Right ventricle myocardium superior (tissue), 1 donor: ENCODE measurements at regions of chr9 and their contacts with region 1.

Region 1: DNA sequence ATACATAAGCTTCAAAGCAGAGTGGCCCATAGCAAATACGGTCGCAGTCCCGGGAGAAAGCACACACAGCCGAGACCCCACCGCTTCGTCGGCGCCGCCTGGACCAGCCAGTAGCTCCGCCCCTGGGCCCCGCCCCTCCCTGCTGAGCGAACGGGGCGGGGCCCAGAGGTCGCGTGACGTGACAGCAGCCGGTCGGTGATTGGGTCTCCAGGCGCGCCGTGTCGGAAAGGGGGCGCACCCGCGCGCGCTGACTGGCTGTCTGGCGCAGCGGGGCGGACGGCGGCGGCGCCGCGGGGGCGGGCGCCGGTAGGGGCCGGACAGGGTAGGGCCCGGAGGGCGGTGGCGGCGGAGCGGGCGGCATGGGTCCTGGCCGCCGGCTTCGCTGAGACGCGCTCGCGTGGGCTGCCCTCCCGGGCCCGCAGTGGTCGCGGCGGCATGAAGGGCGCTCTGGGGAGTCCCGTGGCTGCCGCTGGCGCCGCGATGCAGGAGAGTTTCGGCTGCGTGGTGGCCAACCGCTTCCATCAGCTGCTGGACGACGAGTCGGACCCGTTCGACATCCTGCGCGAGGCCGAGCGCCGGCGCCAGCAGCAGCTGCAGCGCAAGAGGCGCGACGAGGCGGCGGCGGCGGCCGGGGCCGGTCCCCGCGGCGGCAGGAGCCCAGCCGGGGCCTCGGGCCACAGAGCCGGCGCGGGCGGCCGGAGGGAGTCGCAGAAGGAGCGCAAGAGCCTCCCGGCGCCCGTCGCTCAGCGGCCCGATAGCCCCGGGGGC is at the start of gene HABP4:
- DNase-seq: peak; percentile 99
- ATAC-seq: peak; percentile 99
- total RNA-seq, gene HABP4: 22.8 TPM

Region 2: DNA sequence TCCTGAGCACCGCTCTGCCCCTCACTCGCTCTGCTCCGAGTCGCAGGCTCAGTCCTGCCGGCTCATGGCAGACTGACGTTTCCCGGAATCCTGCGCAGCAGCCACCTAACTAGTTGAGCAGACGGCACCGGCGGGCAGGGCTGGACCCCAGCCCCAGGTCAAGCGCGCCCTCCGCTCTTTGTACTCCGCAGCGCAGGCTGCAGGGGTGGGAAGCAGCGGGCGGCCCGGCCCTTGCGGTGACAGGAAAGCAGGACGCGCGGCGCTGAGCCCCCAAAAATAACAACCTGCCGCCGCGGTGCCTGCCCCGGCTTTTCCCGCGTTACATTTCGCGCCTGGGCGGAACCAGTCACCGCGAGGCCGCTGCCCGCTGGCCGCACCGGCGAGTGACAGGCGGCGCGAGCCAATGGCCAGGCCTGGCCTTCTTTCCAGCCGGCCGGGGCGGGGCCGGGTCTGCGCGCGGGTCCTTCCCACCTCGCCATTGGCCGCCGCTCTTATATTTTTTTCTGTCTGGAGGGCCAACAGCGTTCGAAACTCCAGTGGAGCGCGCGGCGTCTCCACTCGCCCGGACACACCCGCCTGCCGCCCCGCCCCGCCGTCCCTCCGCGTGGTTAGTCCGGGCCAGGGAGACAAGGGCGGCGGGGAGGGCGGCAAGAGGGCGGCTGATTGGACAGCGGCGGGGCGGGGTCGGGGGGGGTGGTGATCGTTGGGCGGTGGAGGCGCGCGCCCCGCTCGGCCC is 31.8 kb before region 1 on chr9 and contains the start of gene ZNF367:
- intact Hi-C with region 1: loop called (anchors 2 kb)
- DNase-seq: peak; percentile 99
- ATAC-seq: peak; percentile 86
- total RNA-seq, gene ZNF367: 4.3 TPM

Region 3: GRCh38 chr9:96566498-96567207 is 116.6 kb after region 1 on chr9:
- intact Hi-C with region 1: loop called (anchors 10 kb)
- DNase-seq: peak; percentile 88
- ATAC-seq: peak; percentile 96

Region 4: DNA sequence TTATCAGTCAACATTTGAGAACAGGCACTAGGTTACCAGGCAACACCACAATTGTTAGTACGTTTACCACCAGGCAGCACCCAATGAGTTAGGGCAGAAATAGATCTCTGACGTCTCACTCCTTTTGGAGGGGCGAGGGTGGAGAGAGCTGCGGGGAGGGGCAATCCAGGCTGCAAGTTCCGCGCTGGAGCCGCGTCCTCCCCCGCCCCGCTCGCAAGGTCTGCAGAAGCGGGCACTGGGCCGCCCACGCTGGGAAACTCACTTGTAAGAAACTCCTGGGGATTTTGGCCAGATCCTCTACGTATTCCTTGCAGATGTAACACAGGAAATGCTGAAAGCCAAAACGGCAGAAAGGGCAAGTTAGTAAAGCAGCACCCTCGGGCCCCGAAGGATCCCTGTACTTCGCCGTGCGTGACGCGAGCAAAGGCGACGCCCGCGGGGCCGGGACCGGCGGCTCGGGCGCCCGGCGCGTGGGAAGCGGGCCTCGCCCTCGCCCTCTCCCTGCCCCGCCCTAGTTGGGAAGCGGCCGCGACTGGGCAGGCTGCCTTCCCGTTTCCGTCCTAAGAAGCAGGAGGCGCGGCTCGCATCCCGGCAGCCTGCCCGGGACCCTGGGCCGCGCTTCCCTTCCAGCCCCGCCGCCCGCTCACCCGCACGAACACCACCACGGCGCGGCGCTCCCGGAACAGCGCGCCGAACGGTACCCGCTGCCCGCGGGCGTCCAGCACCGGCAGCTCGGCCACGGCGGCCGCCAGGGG is 204.6 kb after region 1 on chr9:
- intact Hi-C with region 1: loop called (anchors 10 kb)
- DNase-seq: peak; percentile 93
- ATAC-seq: peak; percentile 92

Region 5: DNA sequence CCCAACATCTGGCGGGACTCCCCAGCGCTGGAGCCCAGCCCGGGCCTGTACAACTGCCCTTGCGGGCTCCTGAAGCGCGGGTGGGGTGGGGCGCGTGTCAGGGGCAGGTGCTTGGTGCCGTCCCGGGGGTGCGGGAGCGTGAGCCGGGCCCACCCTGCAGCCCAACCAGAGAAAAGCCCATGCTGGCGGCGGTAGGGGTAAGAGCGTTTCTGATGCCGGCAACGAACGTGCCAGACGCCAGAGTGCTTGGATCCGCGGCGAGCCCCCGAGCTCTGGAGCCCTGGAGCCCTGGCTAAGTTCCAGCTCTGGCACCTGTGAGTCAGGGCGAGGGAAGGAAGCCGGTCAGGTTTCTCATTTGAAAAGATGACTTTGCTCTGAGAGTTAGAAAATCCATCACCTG is 269.9 kb after region 1 on chr9:
- intact Hi-C with region 1: no loop called
- DNase-seq: no peak
- ATAC-seq: no peak